SK-N-SH (cell line): ENCODE measurements at regions of chr15 and their contacts with region 1.

Region 1: DNA sequence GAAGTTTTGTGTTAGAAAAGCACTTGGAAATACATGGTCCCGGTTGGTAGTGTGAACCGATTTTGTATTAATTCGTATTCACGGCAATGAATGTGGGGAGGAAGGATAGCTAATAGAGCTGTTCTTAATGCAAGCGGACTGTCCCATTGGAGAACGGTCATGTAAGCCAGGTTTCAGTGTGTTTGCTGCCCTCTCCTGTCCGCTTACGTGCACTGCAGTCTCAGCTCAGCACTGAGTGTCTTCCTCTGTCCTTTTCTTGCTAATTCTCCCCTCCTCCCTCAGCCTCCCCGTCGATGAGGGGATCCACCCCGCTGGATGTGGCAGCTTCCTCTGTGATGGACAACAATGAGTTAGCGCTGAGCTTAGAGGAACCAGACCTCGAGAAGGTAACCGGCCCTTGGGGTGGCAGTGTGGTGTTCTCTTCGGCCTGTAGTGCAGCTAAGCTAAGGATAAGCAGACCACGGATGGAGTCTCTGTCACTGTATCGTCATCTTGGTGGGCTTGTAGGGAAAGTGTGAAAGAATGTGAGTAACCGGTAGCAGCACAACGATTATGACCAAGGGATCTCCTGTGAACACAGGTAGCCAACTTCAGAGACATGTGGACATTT is 267.5 kb upstream of the CHRM5 start:
- DNase-seq: peak; percentile 66
- H3K4me3 ChIP-seq: no peak overlapping the region; a peak in 1 of 4 replicates
- H3K27ac ChIP-seq: no peak overlapping the region
- H3K4me1 ChIP-seq: peaks cover 0 to 5% of the 10 kb centered on the region in 2 experiments; a peak in 1 of 4 replicates
- H3K27me3 ChIP-seq: 0 out of 2 replicates have a peak, but pooled peaks cover 7% of the 10 kb centered on the region
- CTCF ChIP-seq: peak; percentile 96
- EP300 ChIP-seq: no peak
- RAD21 ChIP-seq: peak; percentile 94

Region 2: DNA sequence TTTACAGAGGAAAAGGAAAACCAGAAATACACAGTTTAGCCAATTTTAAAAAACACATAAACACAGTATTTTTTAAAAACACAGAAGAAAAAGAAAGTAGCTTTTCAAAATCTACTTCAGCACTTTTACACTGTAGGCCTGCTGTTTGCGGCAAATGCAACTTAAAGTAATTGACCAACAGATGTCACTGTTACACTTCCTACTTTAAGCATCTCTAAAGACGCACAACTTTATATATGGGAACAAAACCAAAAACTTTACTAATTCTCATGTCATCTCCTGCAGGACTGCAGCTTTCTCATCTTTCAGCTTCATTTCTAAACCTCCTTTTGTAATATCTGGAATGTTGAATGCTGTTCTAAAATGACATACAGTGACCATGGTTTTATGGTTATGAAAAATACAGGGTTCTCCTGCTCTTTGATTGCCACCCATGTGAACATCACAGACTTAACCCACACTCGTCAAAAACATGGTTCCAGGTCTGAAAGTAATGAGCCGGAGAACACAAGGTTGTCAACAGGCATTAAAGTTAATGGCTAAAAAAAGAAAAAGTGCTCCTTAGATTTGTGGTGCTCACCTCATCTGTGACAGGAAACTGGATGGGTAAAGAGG is 614.2 kb before region 1 on chr15:
- CTCF ChIA-PET with region 1: interaction called, 33 read pairs
- POLR2A ChIA-PET with region 1: no interaction called
- DNase-seq: peak; percentile 30
- H3K4me3 ChIP-seq: no peak overlapping the region
- H3K27ac ChIP-seq: peak overlapping the region; percentile 48 to 85; a peak in 3 of 4 replicates
- H3K4me1 ChIP-seq: peaks cover 3 to 31% of the 10 kb centered on the region in 2 experiments
- H3K27me3 ChIP-seq: no peaks in the 10 kb centered on the region
- CTCF ChIP-seq: peak; percentile 80
- EP300 ChIP-seq: peak in 1 of 2 experiments; percentile 49; a peak in 2 of 4 replicates
- RAD21 ChIP-seq: peak; percentile 87

Region 3: DNA sequence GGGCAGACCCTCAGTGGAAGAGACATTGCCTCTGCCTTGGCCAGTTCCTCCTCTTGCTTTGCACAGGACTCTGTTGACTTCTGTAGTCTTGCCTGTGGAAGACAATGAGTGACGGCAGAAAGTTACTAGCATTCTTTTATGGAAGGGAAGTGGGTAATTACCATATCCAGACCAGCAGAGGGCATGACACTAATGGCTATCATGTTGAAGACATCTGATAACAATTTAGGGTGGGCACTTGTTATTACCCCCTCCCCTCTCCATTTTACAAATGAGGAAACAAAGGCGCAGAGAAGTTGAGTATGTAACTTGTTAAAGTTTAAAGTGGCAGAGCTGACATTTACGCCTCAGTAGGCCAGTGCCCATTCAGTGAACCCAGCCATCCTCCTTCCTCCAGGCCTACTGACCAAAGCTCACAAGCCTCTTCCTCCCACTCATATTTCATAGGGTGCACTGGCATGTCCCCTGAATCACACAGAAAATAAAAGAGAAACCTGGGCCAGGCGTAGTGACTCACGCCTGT is 458.1 kb before region 1 on chr15:
- CTCF ChIA-PET with region 1: interaction called, 51 read pairs
- POLR2A ChIA-PET with region 1: no interaction called
- DNase-seq: peak; percentile 25
- H3K4me3 ChIP-seq: no peak overlapping the region
- H3K27ac ChIP-seq: peak overlapping the region in 1 of 2 experiments; percentile 91; a peak in 3 of 4 replicates
- H3K4me1 ChIP-seq: peaks cover 3 to 15% of the 10 kb centered on the region in 2 experiments; a peak in 3 of 4 replicates
- H3K27me3 ChIP-seq: no peaks in the 10 kb centered on the region
- CTCF ChIP-seq: peak; percentile 69
- EP300 ChIP-seq: no peak
- RAD21 ChIP-seq: peak; percentile 56

Region 4: DNA sequence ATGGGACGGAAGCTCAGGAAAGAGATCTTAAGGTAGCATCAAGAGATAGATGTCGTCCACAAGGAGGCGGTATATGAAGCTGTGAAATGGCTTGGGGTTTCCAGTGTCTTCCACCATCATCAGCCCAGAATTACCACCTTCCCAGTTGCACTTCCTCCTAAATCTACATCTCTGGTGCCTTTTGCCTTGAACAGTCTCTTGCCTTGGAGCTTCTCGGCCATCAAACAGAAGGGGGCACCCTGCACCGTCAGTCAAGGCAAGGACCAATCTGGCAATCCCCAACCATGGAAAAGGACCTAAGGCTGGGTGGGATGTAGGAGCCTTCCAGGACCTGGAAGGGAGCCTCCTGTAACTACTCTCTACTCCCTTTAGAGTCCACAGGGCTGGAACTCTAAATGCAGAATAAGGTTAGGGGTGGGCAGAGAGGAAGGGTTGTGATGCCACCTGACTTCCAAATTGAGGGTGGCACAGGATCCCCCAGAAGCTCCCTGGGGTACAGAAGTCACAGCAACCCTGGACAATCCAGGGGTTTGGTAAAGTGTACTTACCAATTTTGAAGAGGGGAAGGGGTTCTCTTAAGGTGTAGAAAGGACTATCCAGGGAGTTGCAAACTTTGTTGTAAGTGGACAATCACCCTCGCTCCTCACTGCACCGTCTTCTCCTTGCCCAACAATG is 391.1 kb before region 1 on chr15:
- CTCF ChIA-PET with region 1: interaction called, 26 read pairs
- POLR2A ChIA-PET with region 1: no interaction called
- DNase-seq: peak; percentile 28
- H3K4me3 ChIP-seq: no peak overlapping the region
- H3K27ac ChIP-seq: no peak overlapping the region
- H3K4me1 ChIP-seq: peaks cover 0 to 2% of the 10 kb centered on the region in 2 experiments; a peak in 1 of 4 replicates
- H3K27me3 ChIP-seq: peaks cover 41% of the 10 kb centered on the region
- CTCF ChIP-seq: peak; percentile 21
- EP300 ChIP-seq: no peak
- RAD21 ChIP-seq: peak; percentile 48

Region 5: GRCh38 chr15:33567652-33568051 is 133.1 kb before region 1 on chr15:
- CTCF ChIA-PET with region 1: no interaction called
- POLR2A ChIA-PET with region 1: no interaction called
- DNase-seq: no peak
- H3K4me3 ChIP-seq: no peak overlapping the region
- H3K27ac ChIP-seq: no peak overlapping the region
- H3K4me1 ChIP-seq: no peaks in the 10 kb centered on the region
- H3K27me3 ChIP-seq: no peaks in the 10 kb centered on the region
- CTCF ChIP-seq: no peak
- EP300 ChIP-seq: no peak
- RAD21 ChIP-seq: no peak

Region 6: DNA sequence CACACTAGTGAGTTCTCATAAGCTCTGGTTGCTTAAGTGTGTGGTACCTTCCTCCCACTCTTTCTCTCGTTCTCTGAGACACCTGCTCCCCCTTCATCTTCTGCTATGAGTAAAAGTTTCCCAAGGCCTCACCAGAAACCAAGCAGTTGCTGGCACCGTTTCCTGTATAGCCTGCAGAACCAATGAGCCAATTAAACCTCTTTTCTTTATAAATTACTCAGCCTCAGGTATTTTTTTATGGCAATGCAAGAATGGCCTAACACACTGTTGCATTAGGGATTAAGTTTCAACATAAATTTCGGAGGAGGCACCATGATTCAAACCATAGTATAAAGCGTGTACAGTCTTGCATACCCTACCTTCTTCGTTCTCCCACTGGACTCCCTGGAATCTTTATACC is 15.2 kb after region 1 on chr15:
- CTCF ChIA-PET with region 1: interaction called, 37 read pairs
- POLR2A ChIA-PET with region 1: no interaction called
- DNase-seq: no peak
- H3K4me3 ChIP-seq: no peak overlapping the region
- H3K27ac ChIP-seq: no peak overlapping the region
- H3K4me1 ChIP-seq: 0 out of 4 replicates have a peak, but pooled peaks cover 0 to under 1% of the 10 kb centered on the region in 2 experiments
- H3K27me3 ChIP-seq: no peaks in the 10 kb centered on the region
- CTCF ChIP-seq: no peak
- EP300 ChIP-seq: no peak
- RAD21 ChIP-seq: no peak

Region 7: GRCh38 chr15:33737687-33738601 is 37.1 kb after region 1 on chr15:
- CTCF ChIA-PET with region 1: interaction called, 15 read pairs
- POLR2A ChIA-PET with region 1: no interaction called
- DNase-seq: peak; percentile 71
- H3K4me3 ChIP-seq: no peak overlapping the region; a peak in 1 of 4 replicates
- H3K27ac ChIP-seq: no peak overlapping the region
- H3K4me1 ChIP-seq: no peaks in the 10 kb centered on the region; a peak in 1 of 4 replicates
- H3K27me3 ChIP-seq: no peaks in the 10 kb centered on the region
- CTCF ChIP-seq: peak; percentile 88
- EP300 ChIP-seq: no peak
- RAD21 ChIP-seq: peak; percentile 68